ENCODE measurements at regions of chr5 and their contacts with region 1.

Region 1: DNA sequence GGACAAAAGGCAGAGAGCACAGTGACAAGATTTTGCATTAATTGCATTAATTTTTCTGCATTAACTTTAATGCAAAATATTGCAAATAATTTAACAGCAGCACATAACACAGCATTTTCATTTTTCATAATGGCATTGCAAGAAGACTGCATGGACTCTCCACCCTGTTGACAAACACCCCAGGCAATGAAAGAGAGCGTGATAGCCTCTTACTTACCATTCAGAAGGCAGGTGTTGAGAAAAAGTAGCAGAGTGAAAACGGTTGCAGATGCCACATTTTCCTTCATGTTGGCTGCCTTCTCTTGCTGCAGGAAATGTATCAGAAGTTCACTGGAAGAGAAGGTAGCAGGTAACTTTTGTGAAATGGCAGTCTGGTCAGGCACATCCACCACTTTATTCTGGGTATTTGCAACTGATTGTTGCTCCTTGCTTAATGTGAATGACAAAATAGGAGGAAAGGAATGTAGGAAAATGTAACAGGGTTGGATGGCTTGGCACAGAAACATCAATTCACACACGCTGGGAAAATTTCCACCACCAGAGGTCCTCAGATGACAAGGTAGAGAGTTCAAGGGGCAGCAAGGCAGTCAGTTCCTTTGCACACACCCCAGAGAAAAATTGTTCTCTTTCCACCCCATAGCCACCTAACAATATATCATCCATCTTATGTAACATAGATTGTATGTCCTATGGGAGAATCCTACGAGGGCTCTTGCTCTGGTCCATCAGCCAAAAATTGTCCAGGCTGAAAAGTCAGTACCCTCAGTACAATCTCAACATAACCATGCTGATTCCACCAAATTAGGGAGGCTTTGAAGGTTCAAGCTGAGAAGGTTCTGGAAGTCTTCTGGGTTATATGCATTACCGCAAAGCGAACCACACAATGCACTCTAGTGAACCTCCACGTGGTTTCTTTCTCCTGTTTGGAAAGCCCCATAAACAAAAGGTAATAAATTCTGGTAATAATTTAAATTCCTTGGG is 41.9 kb upstream of the AGXT2 start:
- DNase-seq: peak; percentile 28
- ATAC-seq: peak; percentile 92
- H3K4me3 ChIP-seq: no peak overlapping the region
- H3K27ac ChIP-seq: no peak overlapping the region
- H3K4me1 ChIP-seq: no peaks in the 10 kb centered on the region
- H3K27me3 ChIP-seq: no peaks in the 10 kb centered on the region
- CTCF ChIP-seq: peak; percentile 75 to 90 (median 78); a peak in 5 of 6 replicates
- EP300 ChIP-seq: no peak
- POLR2A ChIP-seq: no peak
- RAD21 ChIP-seq: peak; percentile 94

Region 2: GRCh38 chr5:35202319-35203111 is 112.9 kb after region 1 on chr5:
- CTCF ChIA-PET with region 1: interaction called, 13 read pairs
- POLR2A ChIA-PET with region 1: interaction called, 3 read pairs
- RAD21 ChIA-PET with region 1: no interaction called
- SMC1A ChIA-PET with region 1: interaction called, 6 read pairs
- in situ Hi-C with region 1: no loop called
- intact Hi-C with region 1: no loop called
- DNase-seq: no peak
- ATAC-seq: peak; percentile 88
- H3K4me3 ChIP-seq: no peak overlapping the region
- H3K27ac ChIP-seq: no peak overlapping the region
- H3K4me1 ChIP-seq: no peaks in the 10 kb centered on the region
- H3K27me3 ChIP-seq: no peaks in the 10 kb centered on the region
- CTCF ChIP-seq: peak; percentile 35 to 48 (median 45); a peak in 5 of 6 replicates
- EP300 ChIP-seq: no peak
- POLR2A ChIP-seq: no peak
- RAD21 ChIP-seq: peak; percentile 44

Region 3: DNA sequence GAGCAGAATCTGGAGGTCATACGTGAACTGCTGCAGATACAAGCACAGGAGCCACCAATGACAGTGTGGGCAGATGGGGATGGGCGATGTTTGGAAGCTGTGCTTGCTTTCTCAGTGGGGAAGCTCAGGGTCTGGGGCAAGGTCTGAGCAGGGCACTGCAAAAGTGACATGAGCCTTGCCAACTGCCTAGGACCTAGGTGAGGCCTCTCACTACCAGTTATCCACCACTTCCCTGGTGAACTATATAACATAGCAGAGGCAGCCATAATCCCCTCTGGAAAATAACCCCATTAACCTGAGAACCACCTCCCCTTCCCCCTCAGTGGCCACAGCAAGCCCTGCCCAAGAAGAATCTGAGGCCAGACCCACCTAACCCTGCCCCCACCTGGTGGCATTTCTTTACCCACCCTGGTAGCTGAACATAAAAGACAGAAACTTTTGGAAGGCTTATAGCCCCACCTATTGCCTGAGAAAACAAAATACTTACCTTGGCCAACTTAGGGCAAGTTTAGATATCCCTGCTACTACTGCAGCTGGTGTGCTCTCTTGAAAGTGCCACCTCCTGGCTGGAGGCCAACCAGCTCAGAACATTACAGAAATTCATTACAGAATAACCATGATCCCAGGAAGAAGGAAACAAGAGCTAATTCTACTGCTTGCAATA is 509.2 kb after region 1 on chr5:
- CTCF ChIA-PET with region 1: interaction called, 9 read pairs
- POLR2A ChIA-PET with region 1: no interaction called
- RAD21 ChIA-PET with region 1: interaction called, 3 read pairs
- SMC1A ChIA-PET with region 1: interaction called, 8 read pairs
- in situ Hi-C with region 1: no loop called
- intact Hi-C with region 1: loop called (anchors 2 kb)
- DNase-seq: no peak
- ATAC-seq: peak; percentile 87
- H3K4me3 ChIP-seq: no peak overlapping the region
- H3K27ac ChIP-seq: no peak overlapping the region
- H3K4me1 ChIP-seq: no peaks in the 10 kb centered on the region
- H3K27me3 ChIP-seq: no peaks in the 10 kb centered on the region
- CTCF ChIP-seq: peak in 2 of 3 experiments; percentile 21 to 41; a peak in 2 of 6 replicates
- EP300 ChIP-seq: no peak
- POLR2A ChIP-seq: no peak
- RAD21 ChIP-seq: peak; percentile 29; the same call in 1 of the 2 replicates

Region 4: DNA sequence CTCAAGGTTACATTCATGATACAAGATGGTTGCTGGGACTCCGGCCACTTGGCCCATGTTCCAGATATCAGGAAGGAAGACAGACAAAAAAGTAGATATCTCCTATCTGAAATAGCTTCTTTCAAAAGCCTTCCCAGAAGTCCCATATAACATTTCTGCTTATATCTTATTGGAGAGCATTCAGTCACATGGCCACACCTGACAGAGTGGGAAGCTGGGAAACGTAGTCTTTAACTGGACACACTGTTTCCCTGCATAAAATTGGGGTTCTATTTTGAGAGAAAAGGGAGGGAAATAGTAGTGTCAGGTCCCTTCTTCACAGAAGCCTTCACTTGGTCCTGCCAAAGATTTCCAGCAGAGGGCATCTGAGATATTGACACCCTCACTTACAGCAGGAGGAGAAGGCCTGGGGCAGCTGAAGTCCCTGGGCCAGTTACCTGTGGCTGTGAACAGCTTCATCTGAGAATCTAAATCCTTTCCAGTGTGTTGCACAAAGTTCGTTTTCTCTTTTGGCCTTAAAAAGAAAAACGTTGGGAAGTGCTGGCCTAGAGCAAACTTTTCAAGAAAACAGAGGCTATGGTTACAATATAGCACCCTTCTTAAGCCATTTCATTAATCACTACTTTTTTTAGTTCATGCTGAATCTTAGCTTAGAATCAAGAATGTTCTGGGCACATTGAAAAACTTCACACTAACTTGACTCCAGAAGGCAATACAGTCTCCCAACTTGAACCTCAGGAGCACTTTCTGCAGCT is 561.6 kb after region 1 on chr5:
- CTCF ChIA-PET with region 1: interaction called, 7 read pairs
- POLR2A ChIA-PET with region 1: interaction called, 3 read pairs
- RAD21 ChIA-PET with region 1: no interaction called
- SMC1A ChIA-PET with region 1: no interaction called
- in situ Hi-C with region 1: no loop called
- intact Hi-C with region 1: loop called (anchors 1 kb)
- DNase-seq: no peak
- ATAC-seq: peak; percentile 98
- H3K4me3 ChIP-seq: no peak overlapping the region
- H3K27ac ChIP-seq: no peak overlapping the region
- H3K4me1 ChIP-seq: no peaks in the 10 kb centered on the region
- H3K27me3 ChIP-seq: no peaks in the 10 kb centered on the region
- CTCF ChIP-seq: peak; percentile 45 to 57 (median 57); a peak in 4 of 6 replicates
- EP300 ChIP-seq: no peak
- POLR2A ChIP-seq: no peak
- RAD21 ChIP-seq: peak; percentile 56